IMR-90 (cell line): ENCODE measurements at regions of chr2 and their contacts with region 1.

Region 1: GRCh38 chr2:231769170-231770136 is 11.6 kb downstream of the PDE6D start:
- DNase-seq: no peak
- ATAC-seq: no peak
- H3K4me3 ChIP-seq: no peak overlapping the region
- H3K27ac ChIP-seq: no peak overlapping the region
- H3K4me1 ChIP-seq: peaks cover 4% of the 10 kb centered on the region
- H3K27me3 ChIP-seq: no peaks in the 10 kb centered on the region
- CTCF ChIP-seq: no peak
- POLR2A ChIP-seq: no peak
- RAD21 ChIP-seq: no peak

Region 2: DNA sequence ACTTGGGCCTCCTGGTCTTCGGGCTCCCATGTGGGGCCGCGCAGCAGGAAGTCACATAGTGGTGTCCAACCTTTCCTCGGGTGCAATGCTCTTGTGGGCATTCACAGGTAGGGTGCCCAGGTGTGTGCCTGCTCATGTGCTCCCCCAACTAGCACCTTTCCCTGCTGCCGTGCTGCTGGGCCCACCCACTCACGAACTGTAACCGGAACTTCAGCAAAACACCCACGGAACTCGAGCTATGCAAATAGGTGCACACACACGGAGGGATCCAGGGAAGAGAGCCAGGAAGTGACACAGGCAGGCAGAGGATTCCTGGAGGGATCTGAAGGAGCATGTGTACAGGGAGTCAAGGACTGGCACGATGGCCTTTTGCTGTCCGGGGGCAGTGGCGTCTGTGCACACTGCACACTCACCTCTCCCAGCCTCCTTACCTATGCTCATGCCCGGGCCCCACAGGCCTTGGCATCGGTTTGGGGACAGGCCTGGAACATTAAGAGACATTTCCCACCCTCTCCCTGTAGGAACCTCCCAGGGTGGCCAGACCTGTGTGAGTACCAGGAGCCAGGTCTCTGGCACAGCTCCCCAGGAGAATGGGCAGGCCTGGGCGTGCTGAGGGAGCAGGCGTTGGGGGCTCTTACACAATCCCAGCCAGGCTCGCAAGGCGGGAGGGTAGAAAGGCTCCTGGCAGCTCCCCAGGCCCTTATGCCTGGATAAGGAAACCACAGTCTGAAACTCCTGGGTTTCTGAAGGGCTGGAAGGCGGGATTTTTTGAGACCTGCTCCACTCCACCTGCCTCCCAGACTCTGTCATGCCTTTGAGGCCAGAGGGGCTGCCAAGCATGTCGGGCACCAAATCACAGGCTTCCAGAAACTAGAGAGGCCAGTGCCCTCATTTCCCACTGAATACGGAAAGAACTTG is 67.7 kb before region 1 on chr2:
- CTCF ChIA-PET with region 1: no interaction called
- POLR2A ChIA-PET with region 1: no interaction called
- dilution Hi-C with region 1: no loop called
- in situ Hi-C with region 1: no loop called
- intact Hi-C with region 1: no loop called
- DNase-seq: peak; percentile 57
- ATAC-seq: no peak
- H3K4me3 ChIP-seq: no peak overlapping the region
- H3K27ac ChIP-seq: no peak overlapping the region
- H3K4me1 ChIP-seq: peaks cover 7% of the 10 kb centered on the region
- H3K27me3 ChIP-seq: no peaks in the 10 kb centered on the region
- CTCF ChIP-seq: no peak
- POLR2A ChIP-seq: no peak
- RAD21 ChIP-seq: no peak

Region 3: GRCh38 chr2:231732604-231733003 is 36.8 kb before region 1 on chr2:
- CTCF ChIA-PET with region 1: no interaction called
- POLR2A ChIA-PET with region 1: no interaction called
- dilution Hi-C with region 1: no loop called
- in situ Hi-C with region 1: loop called (anchors 5 kb)
- intact Hi-C with region 1: no loop called
- DNase-seq: no peak
- ATAC-seq: no peak
- H3K4me3 ChIP-seq: no peak overlapping the region
- H3K27ac ChIP-seq: no peak overlapping the region
- H3K4me1 ChIP-seq: no peaks in the 10 kb centered on the region
- H3K27me3 ChIP-seq: no peaks in the 10 kb centered on the region
- CTCF ChIP-seq: no peak
- POLR2A ChIP-seq: no peak
- RAD21 ChIP-seq: no peak